GM18951 (cell line): ENCODE measurements at regions of chr4 and their contacts with region 1.

Region 1: GRCh38 chr4:17544205-17544604 is 29.2 kb downstream of the CLRN2 start:
- POLR2A ChIP-seq: no peak

Region 2: GRCh38 chr4:18366892-18367291 is 822.7 kb after region 1 on chr4:
- in situ Hi-C with region 1: loop called (anchors 25 kb)
- POLR2A ChIP-seq: no peak

Region 3: DNA sequence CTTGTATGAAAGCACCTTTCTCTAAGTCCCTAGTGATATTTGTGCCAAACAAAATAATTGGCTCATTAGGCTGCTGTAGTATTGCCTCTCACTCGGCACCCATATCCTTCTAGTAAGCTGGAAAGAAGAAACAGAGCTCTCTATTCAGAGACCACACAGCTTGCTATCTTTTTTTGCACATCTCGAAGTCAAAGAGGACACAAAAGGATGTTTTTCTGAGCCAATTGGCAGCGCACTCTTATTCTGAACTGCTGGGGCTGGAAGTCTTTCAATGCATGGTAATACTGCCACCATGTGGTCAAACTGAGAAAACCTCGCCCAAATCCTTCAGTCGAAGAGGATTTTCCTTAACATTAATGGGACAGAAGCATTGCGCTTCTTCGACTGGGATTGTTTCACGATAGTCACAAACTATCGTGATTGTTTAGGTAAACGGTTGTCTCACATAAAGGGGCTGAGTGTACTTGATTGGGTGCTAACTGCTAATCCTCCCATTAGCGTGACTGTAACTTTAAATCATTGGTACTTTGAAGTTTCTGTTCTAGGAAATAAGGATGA is 1049.3 kb after region 1 on chr4:
- in situ Hi-C with region 1: loop called (anchors 25 kb)
- POLR2A ChIP-seq: no peak